ENCODE measurements at regions of chr2 and their contacts with region 1.

Region 1: GRCh38 chr2:96265840-96266679 is at the starts of genes CIAO1 and TMEM127:
- DNase-seq: peak; percentile 100
- ATAC-seq: peak; percentile 98
- total RNA-seq, gene CIAO1: 59.9 TPM
- total RNA-seq, gene TMEM127: 68.2 TPM

Region 2: GRCh38 chr2:96145036-96145847 is 120.8 kb before region 1 on chr2 and contains the start of gene DUSP2:
- intact Hi-C with region 1: loop called (anchors 5 kb)
- DNase-seq: peak; percentile 85
- ATAC-seq: peak; percentile 90
- total RNA-seq, gene DUSP2: 1.3 TPM

Region 3: DNA sequence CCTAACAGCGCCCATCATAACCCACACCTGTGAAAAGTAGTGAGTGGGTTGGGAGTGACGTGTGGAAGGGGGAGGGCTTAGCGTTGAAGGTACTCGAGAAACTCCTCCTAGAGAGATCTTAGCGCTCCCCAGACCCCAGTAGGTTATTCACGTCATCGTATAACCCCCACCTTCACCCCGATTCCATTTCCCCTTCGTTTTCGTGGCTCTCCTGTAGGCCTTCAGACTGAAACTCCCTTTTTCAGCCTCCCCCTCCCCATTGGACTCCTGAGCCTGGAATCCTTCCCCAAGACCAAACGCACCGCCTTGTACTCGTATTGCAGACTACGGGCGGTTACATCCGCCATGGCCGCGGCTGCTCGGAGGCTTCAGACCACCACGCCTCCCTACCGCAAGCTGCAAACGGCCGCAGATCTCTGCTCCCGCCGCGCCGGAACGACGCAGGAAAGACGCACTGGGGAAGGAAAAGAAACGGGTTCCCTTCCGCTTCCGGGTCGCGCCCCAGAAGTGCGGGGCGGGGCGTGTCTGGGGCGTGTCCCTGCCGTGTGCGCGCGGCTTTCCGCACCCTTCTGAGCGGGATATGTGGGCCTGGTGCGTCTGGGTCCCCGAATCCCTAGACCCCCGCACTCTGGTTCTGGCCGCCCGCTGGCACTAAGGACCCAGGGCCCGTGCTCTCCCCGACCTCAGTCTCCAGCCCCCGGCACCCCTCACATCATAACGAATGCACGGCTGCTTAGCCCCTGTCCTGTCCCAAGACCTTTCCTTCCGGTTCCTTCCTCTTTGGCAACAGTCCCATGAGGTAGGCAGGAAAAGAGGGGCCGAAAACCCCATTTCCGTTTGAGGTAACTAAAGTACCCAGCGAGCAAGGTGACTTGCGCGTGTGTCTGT is 39.3 kb after region 1 on chr2 and contains the start of gene SNRNP200:
- intact Hi-C with region 1: loop called (anchors 5 kb)
- DNase-seq: peak; percentile 94
- ATAC-seq: peak; percentile 99
- total RNA-seq, gene SNRNP200: 50.9 TPM

Region 4: GRCh38 chr2:96315400-96316071 is 49.5 kb after region 1 on chr2:
- intact Hi-C with region 1: no loop called
- DNase-seq: no peak
- ATAC-seq: no peak